Activated naive CD4-positive, alpha-beta T cell treated with anti-CD3 and anti-CD28 coated beads for 36 hours (primary cell): ENCODE measurements at regions of chr3 and their contacts with region 1.

Region 1: GRCh38 chr3:27861046-27862036 is 139.2 kb upstream of the EOMES start:
- DNase-seq: no peak
- H3K4me3 Mint-ChIP-seq: no peak overlapping the region
- H3K27ac Mint-ChIP-seq: peak overlapping the region; percentile 62
- H3K4me1 Mint-ChIP-seq: peaks cover 32% of the 10 kb centered on the region
- H3K27me3 Mint-ChIP-seq: no peaks in the 10 kb centered on the region

Region 2: DNA sequence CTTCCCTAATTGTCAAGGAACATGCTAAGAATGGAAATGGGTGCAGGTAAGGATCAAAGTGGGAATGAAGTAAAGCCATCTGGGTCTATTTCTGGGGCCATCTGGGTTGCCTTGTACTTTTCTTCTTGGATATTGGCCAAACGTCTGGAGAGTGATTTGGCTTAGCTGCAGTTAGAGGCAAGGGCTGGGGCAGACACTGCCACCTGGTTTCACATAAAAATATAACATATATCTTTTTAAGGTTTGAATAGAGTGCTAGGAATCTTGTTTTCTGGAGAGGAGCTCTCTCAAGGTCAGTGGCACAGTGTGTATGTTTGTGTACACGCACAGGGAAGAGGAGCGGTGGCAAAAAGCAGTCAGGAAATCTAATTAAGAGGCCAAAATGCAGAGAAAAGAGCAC is 114.5 kb before region 1 on chr3:
- CTCF ChIA-PET with region 1: no interaction called
- intact Hi-C with region 1: loop called (anchors 5 kb)
- DNase-seq: no peak
- H3K4me3 Mint-ChIP-seq: no peak overlapping the region
- H3K27ac Mint-ChIP-seq: no peak overlapping the region
- H3K4me1 Mint-ChIP-seq: peaks cover 7% of the 10 kb centered on the region
- H3K27me3 Mint-ChIP-seq: no peaks in the 10 kb centered on the region

Region 3: GRCh38 chr3:27848826-27849225 is 12.5 kb before region 1 on chr3:
- CTCF ChIA-PET with region 1: no interaction called
- intact Hi-C with region 1: no loop called
- DNase-seq: no peak
- H3K4me3 Mint-ChIP-seq: no peak overlapping the region
- H3K27ac Mint-ChIP-seq: no peak overlapping the region
- H3K4me1 Mint-ChIP-seq: peaks cover 3% of the 10 kb centered on the region
- H3K27me3 Mint-ChIP-seq: no peaks in the 10 kb centered on the region